Natural killer cell (primary cell): ENCODE measurements at regions of chr7 and their contacts with region 1.

Region 1: GRCh38 chr7:6934986-6935385 is 108.9 kb upstream of the CCZ1B start:
- DNase-seq: no peak
- ATAC-seq: no peak
- H3K4me3 ChIP-seq: no peak overlapping the region
- H3K4me3 Mint-ChIP-seq: no peak overlapping the region
- H3K27ac ChIP-seq: no peak overlapping the region
- H3K27ac Mint-ChIP-seq: no peak overlapping the region
- H3K4me1 ChIP-seq: peaks cover 2% of the 10 kb centered on the region
- H3K4me1 Mint-ChIP-seq: peaks cover 10 to 11% of the 10 kb centered on the region in 2 donors
- H3K27me3 ChIP-seq: no peaks in the 10 kb centered on the region
- H3K27me3 Mint-ChIP-seq: peaks cover 0 to 5% of the 10 kb centered on the region in 2 donors
- CTCF ChIP-seq: no peak

Region 2: DNA sequence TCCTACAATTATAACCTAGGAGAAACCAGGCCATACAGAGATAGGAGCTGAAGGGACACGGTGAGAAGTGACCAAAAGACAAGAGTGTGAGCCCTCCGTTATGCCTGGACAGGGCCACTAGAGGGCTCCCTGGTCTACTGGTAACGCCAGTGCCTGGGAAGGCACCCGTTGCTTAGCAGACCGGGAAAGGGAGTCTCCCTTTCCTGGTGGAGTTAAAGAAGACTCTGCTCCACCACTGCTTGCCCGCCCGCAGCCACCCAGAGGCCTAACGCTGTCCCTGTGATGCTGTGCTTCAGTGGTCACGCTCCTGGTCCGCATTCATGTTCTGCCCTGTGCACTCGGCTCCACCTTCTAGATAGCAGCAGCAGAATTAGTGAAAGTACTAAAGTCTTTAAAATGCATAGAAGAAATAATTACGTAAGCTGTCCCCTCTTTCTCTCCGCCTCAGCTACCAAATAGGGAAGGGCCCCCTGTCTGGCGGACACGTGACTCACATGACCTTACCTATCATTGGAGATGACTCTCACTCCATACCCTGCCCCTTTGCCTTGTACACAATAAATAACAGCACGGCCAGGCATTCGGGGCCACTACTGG is 418.5 kb before region 1 on chr7:
- intact Hi-C with region 1: loop called (anchors 10 kb)
- DNase-seq: peak; percentile 50 to 79
- ATAC-seq: peak; percentile 71 to 86 (median 82)
- H3K4me3 ChIP-seq: peak overlapping the region; percentile 27
- H3K4me3 Mint-ChIP-seq: peak overlapping the region; percentile 79
- H3K27ac ChIP-seq: no peak overlapping the region
- H3K27ac Mint-ChIP-seq: peak overlapping the region in 1 of 2 donors; percentile 18
- H3K4me1 ChIP-seq: peaks cover 6% of the 10 kb centered on the region
- H3K4me1 Mint-ChIP-seq: peaks cover 6 to 14% of the 10 kb centered on the region in 2 donors
- H3K27me3 ChIP-seq: no peaks in the 10 kb centered on the region
- H3K27me3 Mint-ChIP-seq: peaks cover 0 to 9% of the 10 kb centered on the region in 2 donors
- CTCF ChIP-seq: peak; percentile 83